RWPE1 (cell line): ENCODE measurements at regions of chr14 and their contacts with region 1.

Region 1: DNA sequence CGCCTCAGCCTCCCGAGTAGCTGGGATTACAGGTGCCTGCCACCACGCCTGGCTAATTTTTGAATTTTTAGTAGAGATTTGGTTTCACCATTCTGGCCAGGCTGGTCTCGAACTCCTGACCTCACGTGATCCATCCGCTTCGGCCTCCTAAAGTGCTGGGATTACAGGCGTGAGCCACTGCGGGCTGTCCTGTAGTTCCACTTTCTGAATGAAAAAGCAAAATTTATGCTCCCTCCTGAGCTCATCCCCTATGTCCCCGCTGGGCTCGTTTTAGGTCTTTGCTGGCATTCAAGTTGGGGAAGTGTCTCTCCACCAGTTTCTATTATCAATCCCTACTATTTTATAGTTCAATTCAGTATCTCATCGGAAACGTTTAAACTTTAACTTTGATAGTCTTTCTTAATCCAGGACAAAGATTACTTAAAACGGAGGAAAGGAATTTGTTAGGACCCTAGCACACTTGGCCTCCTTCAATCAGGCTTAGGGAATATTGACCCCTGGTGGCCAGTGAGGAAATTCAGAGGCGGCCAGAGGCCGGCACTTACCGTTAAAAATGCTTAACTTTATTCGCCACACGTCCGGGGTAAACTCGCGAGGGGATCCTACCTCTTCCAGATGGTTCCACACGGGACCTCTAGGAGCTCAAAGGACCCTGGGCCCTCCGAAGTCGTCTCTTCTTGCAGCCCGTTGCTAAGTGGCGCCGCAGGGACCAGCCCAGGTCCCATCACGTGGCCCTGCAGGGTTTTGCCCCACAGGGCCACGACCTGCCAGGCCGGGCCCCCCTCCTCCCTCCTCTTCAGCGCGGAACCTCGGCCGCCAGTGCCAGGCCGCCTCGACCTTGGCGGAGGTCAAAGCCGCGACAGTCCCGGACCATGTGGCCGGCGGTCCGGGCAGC is 11.4 kb upstream of the DNAL1 start:
- DNase-seq: peak; percentile 58
- H3K27ac ChIP-seq: no peak overlapping the region; the same call in 1 of the 2 replicates
- CTCF ChIP-seq: peak; percentile 84

Region 2: GRCh38 chr14:73503648-73504047 is 129.7 kb before region 1 on chr14:
- CTCF ChIA-PET with region 1: interaction called, 24 read pairs
- POLR2A ChIA-PET with region 1: no interaction called
- DNase-seq: no peak
- H3K27ac ChIP-seq: no peak overlapping the region
- CTCF ChIP-seq: no peak